ENCODE measurements at regions of chrX and their contacts with region 1.

Region 1: GRCh38 chrX:107672955-107673378 is 44.7 kb downstream of the PRPS1 start:
- DNase-seq: peak; percentile 76 to 89 (median 83)
- H3K4me3 ChIP-seq: no peak overlapping the region
- H3K27ac ChIP-seq: peak overlapping the region in 1 of 2 donors; percentile 76
- H3K4me1 ChIP-seq: peaks cover 2% of the 10 kb centered on the region
- H3K27me3 ChIP-seq: no peaks in the 10 kb centered on the region
- CTCF ChIP-seq: peak; percentile 28 to 79 (median 67)
- EP300 ChIP-seq: no peak
- POLR2A ChIP-seq: peak; percentile 23

Region 2: DNA sequence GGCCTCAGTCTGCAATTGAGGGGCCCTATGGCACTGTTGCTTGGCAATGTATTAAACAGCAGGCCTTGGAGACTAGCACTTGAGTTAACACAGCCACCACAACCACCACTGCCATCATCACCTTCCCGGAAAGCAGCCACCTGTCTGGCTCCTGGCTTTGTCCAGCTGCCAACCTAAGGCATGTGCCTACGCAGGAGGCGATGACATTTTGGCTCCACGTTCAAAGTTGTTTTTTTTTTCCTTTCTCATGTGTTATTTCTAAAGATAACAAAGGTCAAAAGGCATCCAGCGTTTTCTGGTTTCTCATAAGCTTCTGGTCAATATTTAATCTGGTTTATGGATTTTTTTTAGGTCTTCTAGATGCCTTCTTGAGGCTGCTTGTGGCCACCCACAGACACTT is 745.3 kb before region 1 on chrX:
- intact Hi-C with region 1: no loop called
- DNase-seq: no peak
- H3K4me3 ChIP-seq: no peak overlapping the region
- H3K27ac ChIP-seq: no peak overlapping the region
- H3K4me1 ChIP-seq: no peaks in the 10 kb centered on the region
- H3K27me3 ChIP-seq: no peaks in the 10 kb centered on the region
- CTCF ChIP-seq: no peak
- EP300 ChIP-seq: no peak
- POLR2A ChIP-seq: no peak

Region 3: GRCh38 chrX:107710617-107711391 is 37.8 kb after region 1 on chrX:
- intact Hi-C with region 1: loop called in 3 of 4 experiments (anchors 2 to 5 kb)
- DNase-seq: peak in 2 of 5 donors; percentile 47 to 71
- H3K4me3 ChIP-seq: no peak overlapping the region
- H3K27ac ChIP-seq: peak overlapping the region; percentile 21 to 23
- H3K4me1 ChIP-seq: peaks cover 5% of the 10 kb centered on the region
- H3K27me3 ChIP-seq: no peaks in the 10 kb centered on the region
- CTCF ChIP-seq: no peak
- EP300 ChIP-seq: peak; percentile 43
- POLR2A ChIP-seq: no peak

Region 4: DNA sequence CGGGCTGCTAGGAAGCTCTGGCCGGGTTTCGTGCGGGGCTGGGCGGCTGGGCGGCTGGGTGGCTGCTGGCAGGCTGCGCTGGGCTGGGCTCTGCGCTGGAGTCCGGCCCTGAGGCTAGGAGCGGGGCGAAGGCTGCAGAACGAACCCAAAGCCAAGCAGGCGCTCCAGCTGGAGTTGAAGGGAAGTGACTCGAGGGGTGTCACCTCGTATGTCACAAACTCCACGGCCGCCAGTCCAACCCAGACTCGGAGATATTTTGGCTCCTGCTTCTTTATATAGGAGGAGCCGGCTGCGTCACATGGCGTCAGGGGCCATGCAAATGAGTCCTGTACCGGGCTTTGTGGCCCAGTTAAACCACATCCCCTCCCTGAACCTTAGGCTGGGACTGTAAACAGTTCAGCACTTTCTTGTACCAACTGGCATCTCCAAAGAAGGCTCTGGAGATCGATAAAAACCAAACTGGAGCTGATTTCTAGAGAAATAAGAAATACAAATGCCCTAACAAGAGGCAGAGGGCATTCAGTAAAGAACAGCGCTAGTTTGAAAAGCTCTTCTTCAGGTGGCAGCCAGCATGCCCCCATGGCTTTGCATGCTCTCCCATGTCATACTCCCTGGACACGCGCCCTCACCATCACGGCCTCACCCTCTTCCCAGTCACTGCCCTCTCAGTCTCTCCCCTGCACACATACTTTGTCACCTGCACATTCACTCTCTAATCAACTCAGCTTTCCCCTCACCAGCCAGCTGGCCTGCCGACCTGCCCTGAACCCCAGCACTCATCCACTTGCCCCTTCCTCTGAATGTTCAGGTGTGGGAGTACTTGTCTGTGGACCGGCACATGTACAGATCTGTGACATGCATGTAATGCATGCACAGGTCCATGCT is 44.1 kb after region 1 on chrX:
- intact Hi-C with region 1: loop called in 3 of 4 experiments (anchors 2 to 5 kb)
- DNase-seq: peak; percentile 68 to 91 (median 76)
- H3K4me3 ChIP-seq: peak overlapping the region; percentile 50
- H3K27ac ChIP-seq: peak overlapping the region; percentile 83 to 96
- H3K4me1 ChIP-seq: peaks cover 10% of the 10 kb centered on the region
- H3K27me3 ChIP-seq: no peaks in the 10 kb centered on the region
- CTCF ChIP-seq: peak in 1 of 3 donors; percentile 23
- EP300 ChIP-seq: no peak
- POLR2A ChIP-seq: peak; percentile 92